ENCODE measurements at regions of chr15 and their contacts with region 1.

Region 1: DNA sequence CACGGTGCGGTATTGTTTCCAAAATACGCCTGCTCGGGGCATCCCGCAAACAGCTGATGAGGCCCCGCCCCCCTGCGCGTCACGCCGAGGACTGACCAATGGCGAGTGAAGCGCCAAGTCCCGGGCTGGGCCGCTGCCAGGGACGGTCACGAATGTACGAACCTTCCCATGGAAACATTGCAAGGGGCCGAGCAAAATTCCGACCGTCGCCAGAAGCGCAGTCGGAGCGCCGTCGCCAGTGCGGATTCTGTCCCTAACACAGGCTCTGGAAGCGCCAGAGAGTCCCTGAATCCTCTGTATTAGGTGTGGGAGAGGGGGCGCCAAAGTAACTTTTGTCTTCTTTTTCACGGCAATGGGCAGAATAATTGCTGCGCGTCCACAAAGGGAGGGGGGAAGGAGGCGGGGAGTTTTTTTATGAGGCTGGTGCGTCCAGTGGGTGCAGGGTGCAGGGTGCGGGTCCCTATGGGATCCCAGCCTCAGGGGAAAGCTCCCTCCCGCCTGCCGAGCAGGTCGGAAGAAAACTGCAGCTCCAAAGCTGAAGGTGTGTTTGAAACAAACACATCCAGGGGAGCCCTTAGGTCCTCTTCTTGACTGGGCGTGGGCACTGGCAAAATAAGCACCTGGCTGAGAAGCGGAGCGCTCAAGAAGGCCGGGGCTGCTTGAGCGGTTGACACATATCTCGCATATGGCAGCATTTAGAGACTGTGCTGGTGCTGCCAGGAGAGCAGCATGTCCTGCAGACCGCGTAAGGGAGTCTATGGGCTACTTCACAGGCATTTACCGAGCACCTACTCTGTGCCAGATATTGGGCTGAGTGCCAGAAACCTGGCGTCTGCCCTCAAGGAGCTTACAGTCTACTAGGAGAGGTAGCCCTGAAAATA is at the start of gene BMF:
- DNase-seq: peak; percentile 87 to 98 (median 90)
- ATAC-seq: peak; percentile 89
- H3K4me3 ChIP-seq: peak within 1 kb of the TSS; percentile 44
- H3K4me3 Mint-ChIP-seq: peak within 1 kb of the TSS; percentile 89 to 99 (median 94)
- H3K27ac ChIP-seq: peak within 1 kb of the TSS; percentile 52
- H3K27ac Mint-ChIP-seq: peak within 1 kb of the TSS; percentile 69 to 92 (median 80)
- H3K4me1 ChIP-seq: peaks cover 24 to 32% of the 10 kb centered on the region in 2 donors
- H3K4me1 Mint-ChIP-seq: peaks cover 35 to 56% (median 49%) of the 10 kb centered on the region in 7 donors
- H3K27me3 ChIP-seq: no peaks in the 10 kb centered on the region
- H3K27me3 Mint-ChIP-seq: peaks cover 0 to 19% (median 8%) of the 10 kb centered on the region in 5 donors
- total RNA-seq, gene BMF: 7.7 to 31.1 (median 19.6) TPM

Region 2: GRCh38 chr15:40038638-40039543 is 70.2 kb before region 1 on chr15 and contains the start of gene SRP14:
- CTCF ChIA-PET with region 1: interaction called, 8 read pairs
- POLR2A ChIA-PET with region 1: interaction called, 4 read pairs
- intact Hi-C with region 1: loop called in 1 of 2 experiments (anchors 1 kb)
- DNase-seq: peak; percentile 74 to 93 (median 87)
- ATAC-seq: peak; percentile 98
- H3K4me3 ChIP-seq: peak within 1 kb of the TSS; percentile 86
- H3K4me3 Mint-ChIP-seq: peak within 1 kb of the TSS; percentile 92 to 100 (median 100)
- H3K27ac ChIP-seq: peak within 1 kb of the TSS; percentile 96
- H3K27ac Mint-ChIP-seq: peak within 1 kb of the TSS; percentile 94 to 99 (median 98)
- H3K4me1 ChIP-seq: peaks cover 15 to 18% of the 10 kb centered on the region in 2 donors
- H3K4me1 Mint-ChIP-seq: peaks cover 28 to 58% (median 53%) of the 10 kb centered on the region in 7 donors
- H3K27me3 ChIP-seq: no peaks in the 10 kb centered on the region
- H3K27me3 Mint-ChIP-seq: no peaks in the 10 kb centered on the region
- total RNA-seq, gene SRP14: 92.1 to 157 (median 111) TPM

Region 3: DNA sequence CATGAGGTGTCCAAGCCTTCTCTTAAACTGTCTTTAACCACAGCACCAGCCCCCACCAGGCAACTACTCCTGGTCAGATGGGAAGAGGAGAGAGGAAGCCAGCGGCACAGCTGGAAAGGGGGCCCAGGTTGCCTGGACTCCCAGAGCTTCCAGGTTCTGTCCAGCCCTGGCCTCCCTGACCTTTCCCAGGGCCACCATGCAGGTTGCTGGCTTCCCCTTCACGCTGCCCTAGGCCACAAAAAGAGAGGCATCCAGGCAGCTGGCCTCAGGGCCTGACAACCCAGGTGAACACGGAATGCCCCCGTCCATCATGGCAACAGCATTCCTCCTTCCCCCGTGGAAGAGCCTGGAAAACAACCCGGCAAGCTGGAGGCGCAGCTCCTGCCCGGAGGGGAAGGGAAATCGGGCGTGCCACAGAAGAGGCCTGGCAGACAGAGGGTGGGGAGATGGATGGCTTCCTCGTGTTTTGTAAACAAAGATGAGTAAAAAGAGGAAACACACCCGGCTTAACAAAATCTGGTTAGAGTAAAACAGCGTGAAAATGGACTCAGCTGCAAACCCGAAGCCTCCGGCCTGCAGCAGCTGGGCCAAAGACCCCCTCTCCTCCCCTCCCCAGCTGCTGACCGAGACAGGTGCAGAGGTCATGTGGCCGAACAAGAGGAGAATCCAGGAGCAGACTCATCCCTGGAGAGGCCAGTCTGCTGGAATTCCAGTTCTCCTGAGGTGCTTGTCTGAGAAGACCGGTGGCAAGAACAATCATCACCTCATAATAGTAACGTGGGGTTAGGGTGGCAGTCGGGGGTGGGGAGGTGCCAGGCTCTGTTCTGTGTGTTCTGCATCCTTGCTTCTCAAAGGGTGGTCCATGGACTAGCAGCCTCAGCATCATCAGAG is 15.9 kb before region 1 on chr15:
- CTCF ChIA-PET with region 1: interaction called, 20 read pairs
- POLR2A ChIA-PET with region 1: interaction called, 11 read pairs
- intact Hi-C with region 1: loop called (anchors 1 kb)
- DNase-seq: no peak
- ATAC-seq: peak; percentile 48
- H3K4me3 ChIP-seq: no peak overlapping the region
- H3K4me3 Mint-ChIP-seq: no peak overlapping the region
- H3K27ac ChIP-seq: no peak overlapping the region
- H3K27ac Mint-ChIP-seq: no peak overlapping the region
- H3K4me1 ChIP-seq: peaks cover 4 to 13% of the 10 kb centered on the region in 2 donors
- H3K4me1 Mint-ChIP-seq: peaks cover 17 to 52% (median 26%) of the 10 kb centered on the region in 7 donors
- H3K27me3 ChIP-seq: no peaks in the 10 kb centered on the region
- H3K27me3 Mint-ChIP-seq: no peaks in the 10 kb centered on the region

Region 4: DNA sequence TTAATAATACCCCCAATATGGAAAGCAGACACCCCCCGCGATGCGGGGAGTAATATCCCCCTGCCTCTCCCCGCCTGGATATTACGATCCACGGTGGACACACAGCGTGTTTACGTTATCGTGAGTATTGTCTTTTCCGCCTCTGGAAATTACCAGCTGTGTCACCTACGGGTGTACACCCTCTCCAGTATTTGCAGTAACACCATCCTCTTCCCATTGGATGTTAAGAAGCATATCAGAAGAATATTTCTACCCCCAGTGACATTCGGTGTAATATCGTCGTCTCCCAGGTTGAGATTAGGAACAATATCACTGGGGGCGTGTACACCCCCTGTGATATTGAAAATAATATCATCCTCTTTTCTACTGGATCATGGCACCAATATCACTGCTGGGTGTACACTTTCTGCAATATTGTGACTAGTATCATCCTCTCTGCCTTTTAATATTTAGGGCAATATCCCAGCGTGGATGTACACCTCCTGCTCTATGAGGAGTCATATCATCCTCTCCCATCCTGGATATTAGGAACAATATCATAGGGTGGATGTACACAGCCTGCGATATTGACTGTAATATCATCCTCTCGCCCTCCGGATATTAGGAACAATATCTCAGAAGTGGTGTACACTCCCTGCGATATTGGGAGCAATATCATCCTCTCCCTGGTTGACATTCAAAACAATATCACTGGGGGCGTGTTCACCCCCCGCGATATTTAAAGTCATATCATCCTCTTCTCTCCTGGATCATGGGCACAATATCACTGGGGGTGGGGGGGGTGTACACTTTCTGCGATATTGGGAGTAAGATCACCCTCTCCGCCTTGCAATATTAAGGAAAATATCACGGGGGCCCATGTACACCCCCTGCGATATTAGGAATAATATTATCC is 19.9 kb after region 1 on chr15:
- CTCF ChIA-PET with region 1: interaction called, 3 read pairs
- POLR2A ChIA-PET with region 1: no interaction called
- intact Hi-C with region 1: loop called in 1 of 2 experiments (anchors 2 kb)
- DNase-seq: peak in 6 of 9 donors; percentile 18 to 75 (median 56)
- ATAC-seq: peak; percentile 50
- H3K4me3 ChIP-seq: no peak overlapping the region
- H3K4me3 Mint-ChIP-seq: no peak overlapping the region
- H3K27ac ChIP-seq: no peak overlapping the region
- H3K27ac Mint-ChIP-seq: peak overlapping the region in 1 of 9 donors; percentile 81
- H3K4me1 ChIP-seq: no peaks in the 10 kb centered on the region
- H3K4me1 Mint-ChIP-seq: no peaks in the 10 kb centered on the region
- H3K27me3 ChIP-seq: no peaks in the 10 kb centered on the region
- H3K27me3 Mint-ChIP-seq: peaks cover 0 to 10% (median 5%) of the 10 kb centered on the region in 5 donors

Region 5: GRCh38 chr15:40217159-40217824 is 108.2 kb after region 1 on chr15:
- CTCF ChIA-PET with region 1: interaction called, 3 read pairs
- POLR2A ChIA-PET with region 1: no interaction called
- intact Hi-C with region 1: loop called in 1 of 2 experiments (anchors 5 kb)
- DNase-seq: peak in 7 of 9 donors; percentile 50 to 75 (median 63)
- ATAC-seq: peak; percentile 96
- H3K4me3 ChIP-seq: no peak overlapping the region
- H3K4me3 Mint-ChIP-seq: no peak overlapping the region
- H3K27ac ChIP-seq: no peak overlapping the region
- H3K27ac Mint-ChIP-seq: no peak overlapping the region
- H3K4me1 ChIP-seq: no peaks in the 10 kb centered on the region
- H3K4me1 Mint-ChIP-seq: peaks cover 0 to 2% (median 0%) of the 10 kb centered on the region in 7 donors
- H3K27me3 ChIP-seq: no peaks in the 10 kb centered on the region
- H3K27me3 Mint-ChIP-seq: no peaks in the 10 kb centered on the region

Region 6: GRCh38 chr15:40405501-40406381 is 296.6 kb after region 1 on chr15 and contains the start of gene IVD:
- CTCF ChIA-PET with region 1: no interaction called
- POLR2A ChIA-PET with region 1: no interaction called
- intact Hi-C with region 1: loop called in 1 of 2 experiments (anchors 2 kb)
- DNase-seq: peak; percentile 67 to 88 (median 79)
- ATAC-seq: peak; percentile 99
- H3K4me3 ChIP-seq: peak within 1 kb of the TSS; percentile 49
- H3K4me3 Mint-ChIP-seq: peak within 1 kb of the TSS; percentile 79 to 94 (median 92)
- H3K27ac ChIP-seq: peak within 1 kb of the TSS; percentile 70
- H3K27ac Mint-ChIP-seq: peak within 1 kb of the TSS; percentile 38 to 92 (median 90)
- H3K4me1 ChIP-seq: peaks cover 6 to 15% of the 10 kb centered on the region in 2 donors
- H3K4me1 Mint-ChIP-seq: peaks cover 9 to 49% (median 30%) of the 10 kb centered on the region in 7 donors
- H3K27me3 ChIP-seq: no peaks in the 10 kb centered on the region
- H3K27me3 Mint-ChIP-seq: no peaks in the 10 kb centered on the region
- total RNA-seq, gene IVD: 47.2 to 81.8 (median 64.7) TPM

Region 7: GRCh38 chr15:40952901-40953712 is 844.0 kb after region 1 on chr15 and contains the start of gene CHAC1:
- CTCF ChIA-PET with region 1: no interaction called
- POLR2A ChIA-PET with region 1: no interaction called
- intact Hi-C with region 1: no loop called
- DNase-seq: peak; percentile 79 to 97 (median 94)
- ATAC-seq: peak; percentile 98
- H3K4me3 ChIP-seq: peak within 1 kb of the TSS; percentile 68
- H3K4me3 Mint-ChIP-seq: peak within 1 kb of the TSS; percentile 87 to 96 (median 94)
- H3K27ac ChIP-seq: peak within 1 kb of the TSS; percentile 74
- H3K27ac Mint-ChIP-seq: peak within 1 kb of the TSS in 8 of 9 donors; percentile 76 to 95 (median 88)
- H3K4me1 ChIP-seq: peaks cover 10 to 14% of the 10 kb centered on the region in 2 donors
- H3K4me1 Mint-ChIP-seq: peaks cover 7 to 34% (median 19%) of the 10 kb centered on the region in 7 donors
- H3K27me3 ChIP-seq: no peaks in the 10 kb centered on the region
- H3K27me3 Mint-ChIP-seq: peaks cover 0 to 4% (median 0%) of the 10 kb centered on the region in 5 donors
- total RNA-seq, gene CHAC1: 0.24 to 5.7 (median 1.1) TPM

Measured in naive thymus-derived CD4-positive, alpha-beta T cell (primary cell).